ENCODE measurements at regions of chr6 and their contacts with region 1.

Region 1: GRCh38 chr6:164097557-164098398 is 683.3 kb downstream of the QKI start:
- DNase-seq: peak in 1 of 2 donors; percentile 50
- ATAC-seq: peak; percentile 61 to 74 (median 64)
- H3K4me3 ChIP-seq: no peak overlapping the region
- H3K27ac ChIP-seq: peak overlapping the region; percentile 77
- H3K4me1 ChIP-seq: peaks cover 28% of the 10 kb centered on the region
- H3K27me3 ChIP-seq: no peaks in the 10 kb centered on the region
- CTCF ChIP-seq: peak; percentile 33

Region 2: GRCh38 chr6:164016056-164016455 is 81.7 kb before region 1 on chr6:
- intact Hi-C with region 1: loop called in 1 of 2 experiments (anchors 2 kb)
- DNase-seq: no peak
- ATAC-seq: no peak
- H3K4me3 ChIP-seq: no peak overlapping the region
- H3K27ac ChIP-seq: no peak overlapping the region
- H3K4me1 ChIP-seq: no peaks in the 10 kb centered on the region
- H3K27me3 ChIP-seq: no peaks in the 10 kb centered on the region
- CTCF ChIP-seq: no peak

Measured in psoas muscle (tissue), 8 donors.